ENCODE measurements at regions of chr2 and their contacts with region 1.

Region 1: DNA sequence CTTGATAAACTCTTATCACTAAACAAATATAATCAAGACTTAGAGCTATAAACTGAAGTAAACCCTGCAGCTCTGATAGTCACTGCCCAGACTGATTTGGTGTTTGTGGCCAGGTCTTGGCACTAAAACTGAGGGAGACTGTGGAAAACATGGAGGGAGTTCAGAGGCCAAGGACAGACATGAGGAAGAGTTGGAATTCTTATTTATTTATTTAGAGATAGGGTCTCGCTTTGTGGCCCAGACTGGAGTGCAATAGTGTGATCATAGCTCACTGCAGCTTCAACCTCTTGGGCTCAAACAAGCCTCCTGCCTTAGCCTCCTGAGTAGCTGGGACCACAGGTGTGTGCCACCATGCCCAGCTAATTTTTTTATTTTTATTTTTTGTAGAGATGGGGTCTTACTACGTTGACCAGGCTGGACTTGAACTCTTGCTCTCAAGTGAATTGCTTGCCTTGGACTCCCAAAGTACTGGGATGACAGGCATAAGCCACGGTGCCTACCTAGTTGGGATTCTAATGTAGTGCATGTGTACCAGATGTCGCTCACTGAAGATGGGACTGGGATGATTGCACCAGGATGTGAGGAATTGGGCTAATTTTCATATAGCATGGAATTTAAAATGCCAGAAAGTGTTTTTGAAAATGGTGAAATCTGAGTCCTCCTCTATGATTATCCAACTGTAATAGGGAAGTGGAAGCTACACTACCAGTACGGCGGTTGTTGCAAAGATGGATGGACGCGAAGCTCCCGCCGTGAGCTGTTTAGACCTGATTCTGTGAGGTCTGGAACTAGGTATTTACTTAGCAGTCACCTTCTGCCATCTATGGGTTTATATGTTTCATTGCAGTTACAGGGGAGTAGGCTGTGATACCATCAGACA is 52.7 kb upstream of the CTLA4 start:
- DNase-seq: peak; percentile 84
- H3K4me3 Mint-ChIP-seq: peak overlapping the region; percentile 72
- H3K27ac Mint-ChIP-seq: peak overlapping the region; percentile 69
- H3K4me1 Mint-ChIP-seq: peaks cover 47% of the 10 kb centered on the region
- H3K27me3 Mint-ChIP-seq: no peaks in the 10 kb centered on the region

Region 2: GRCh38 chr2:202588647-202589581 is 1226.0 kb before region 1 on chr2:
- intact Hi-C with region 1: loop called (anchors 5 kb)
- DNase-seq: peak; percentile 89
- H3K4me3 Mint-ChIP-seq: no peak overlapping the region
- H3K27ac Mint-ChIP-seq: peak overlapping the region; percentile 38
- H3K4me1 Mint-ChIP-seq: peaks cover 10% of the 10 kb centered on the region
- H3K27me3 Mint-ChIP-seq: peaks cover 3% of the 10 kb centered on the region

Region 3: GRCh38 chr2:203238704-203239526 is 576.0 kb before region 1 on chr2 and contains the start of gene CYP20A1:
- intact Hi-C with region 1: loop called (anchors 5 kb)
- DNase-seq: peak; percentile 99
- H3K4me3 Mint-ChIP-seq: peak within 1 kb of the TSS; percentile 95
- H3K27ac Mint-ChIP-seq: peak within 1 kb of the TSS; percentile 100
- H3K4me1 Mint-ChIP-seq: peaks cover 27% of the 10 kb centered on the region
- H3K27me3 Mint-ChIP-seq: no peaks in the 10 kb centered on the region
- total RNA-seq, gene CYP20A1: 21.6 and 23.2 TPM in 2 replicates

Region 4: GRCh38 chr2:203599509-203599908 is 215.4 kb before region 1 on chr2:
- intact Hi-C with region 1: loop called (anchors 5 kb)
- DNase-seq: peak; percentile 66
- H3K4me3 Mint-ChIP-seq: no peak overlapping the region
- H3K27ac Mint-ChIP-seq: peak overlapping the region; percentile 21
- H3K4me1 Mint-ChIP-seq: peaks cover 30% of the 10 kb centered on the region
- H3K27me3 Mint-ChIP-seq: peaks cover 54% of the 10 kb centered on the region

Region 5: GRCh38 chr2:203740780-203741281 is 74.1 kb before region 1 on chr2:
- intact Hi-C with region 1: loop called (anchors 2 kb)
- DNase-seq: peak; percentile 89
- H3K4me3 Mint-ChIP-seq: peak overlapping the region; percentile 69
- H3K27ac Mint-ChIP-seq: peak overlapping the region; percentile 96
- H3K4me1 Mint-ChIP-seq: peaks cover 72% of the 10 kb centered on the region
- H3K27me3 Mint-ChIP-seq: no peaks in the 10 kb centered on the region

Region 6: DNA sequence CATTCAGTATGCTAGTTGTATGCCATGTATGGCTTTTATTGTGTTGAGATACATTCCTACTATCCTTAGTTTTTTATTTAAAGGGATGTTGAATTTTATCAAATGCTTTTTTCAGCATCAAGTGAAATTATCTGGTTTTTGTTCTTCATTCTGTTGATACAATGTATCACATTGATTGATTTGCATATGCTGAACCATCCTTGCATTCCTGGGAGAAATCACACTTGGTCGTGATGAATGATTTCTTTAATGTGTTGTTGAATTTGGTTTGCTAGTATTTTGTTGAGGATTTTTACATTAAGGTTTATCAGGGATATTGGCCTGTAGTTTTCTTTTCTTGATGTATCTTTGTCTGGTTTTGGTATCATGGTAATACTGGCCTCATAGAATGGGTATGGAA is 58.7 kb before region 1 on chr2:
- intact Hi-C with region 1: no loop called
- DNase-seq: no peak
- H3K4me3 Mint-ChIP-seq: no peak overlapping the region
- H3K27ac Mint-ChIP-seq: no peak overlapping the region
- H3K4me1 Mint-ChIP-seq: peaks cover 24% of the 10 kb centered on the region
- H3K27me3 Mint-ChIP-seq: no peaks in the 10 kb centered on the region

Region 7: GRCh38 chr2:203804070-203804469 is 10.8 kb before region 1 on chr2:
- intact Hi-C with region 1: loop called (anchors 1 kb)
- DNase-seq: peak; percentile 82
- H3K4me3 Mint-ChIP-seq: peak overlapping the region; percentile 40
- H3K27ac Mint-ChIP-seq: peak overlapping the region; percentile 84
- H3K4me1 Mint-ChIP-seq: peaks cover 60% of the 10 kb centered on the region
- H3K27me3 Mint-ChIP-seq: no peaks in the 10 kb centered on the region

Region 8: DNA sequence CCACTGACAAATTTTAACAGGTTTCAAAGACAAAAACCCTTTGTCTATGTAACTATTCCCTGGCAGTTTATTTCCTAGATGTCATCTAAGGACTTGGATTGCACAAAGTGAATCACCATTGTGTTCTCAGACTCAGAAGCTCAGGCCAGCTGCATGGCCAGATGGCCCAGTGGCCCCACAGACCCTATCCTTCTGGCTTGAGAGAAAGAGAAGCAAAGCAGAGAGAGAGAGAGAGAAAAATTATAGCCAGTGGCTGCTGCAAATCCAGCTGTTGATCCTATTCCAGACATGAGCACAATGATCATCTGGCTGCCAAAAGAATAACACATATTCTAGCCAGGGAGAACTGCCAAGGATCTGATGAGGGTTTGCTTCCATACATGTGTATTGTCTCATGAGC is 78.5 kb after region 1 on chr2:
- intact Hi-C with region 1: no loop called
- DNase-seq: no peak
- H3K4me3 Mint-ChIP-seq: peak overlapping the region; percentile 21
- H3K27ac Mint-ChIP-seq: peak overlapping the region; percentile 62
- H3K4me1 Mint-ChIP-seq: peaks cover 65% of the 10 kb centered on the region
- H3K27me3 Mint-ChIP-seq: no peaks in the 10 kb centered on the region

Measured in activated CD4-positive, alpha-beta T cell treated with anti-CD3 and anti-CD28 coated beads, Interleukin-2, amount 10 ng/mL, durations not matched to agents 24 days and 14 days (primary cell).